Mammary epithelial cell (primary cell): ENCODE measurements at regions of chr4 and their contacts with region 1.

Region 1: GRCh38 chr4:157514711-157515110 is 294.2 kb downstream of the GRIA2 start:
- DNase-seq: no peak
- H3K4me3 ChIP-seq: no peak overlapping the region
- H3K27ac ChIP-seq: no peak overlapping the region
- H3K4me1 ChIP-seq: no peaks in the 10 kb centered on the region
- H3K27me3 ChIP-seq: peaks cover 3% of the 10 kb centered on the region
- CTCF ChIP-seq: peak; percentile 11 to 35

Region 2: DNA sequence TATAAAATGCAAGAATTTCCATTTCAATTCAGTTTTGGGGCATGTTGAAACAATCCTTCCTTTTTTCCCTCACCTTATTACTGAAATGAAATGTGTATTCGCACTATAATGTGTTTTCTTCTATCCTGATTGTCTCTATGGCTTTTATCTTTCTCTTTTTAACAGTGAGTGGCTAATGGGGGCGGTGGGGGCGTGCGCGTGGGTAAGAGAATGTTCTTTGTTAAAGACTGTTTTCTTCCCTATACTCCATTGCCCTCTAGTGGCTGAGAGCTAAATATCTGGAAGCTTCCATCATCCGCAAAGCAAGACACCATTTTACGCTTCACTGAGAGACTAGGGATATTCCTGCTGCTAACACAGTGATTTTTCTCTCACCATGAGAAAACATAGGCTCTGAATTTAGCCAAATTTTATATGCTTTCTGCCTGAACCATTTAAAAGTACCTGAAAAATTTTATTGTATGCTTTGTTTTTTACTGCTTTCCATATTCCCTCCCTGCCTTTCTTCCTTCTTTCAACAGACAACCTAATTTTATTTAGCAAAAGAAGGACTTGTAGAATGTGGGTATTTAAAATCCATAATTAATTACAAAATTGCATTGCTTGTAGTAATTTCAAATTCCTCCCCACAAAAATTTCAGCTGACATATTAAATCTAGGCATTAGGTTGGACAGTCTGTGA is 464.1 kb after region 1 on chr4:
- CTCF ChIA-PET with region 1: interaction called, 4 read pairs
- dilution Hi-C with region 1: no loop called
- in situ Hi-C with region 1: no loop called
- intact Hi-C with region 1: loop called (anchors 1 kb)
- DNase-seq: peak; percentile 44
- H3K4me3 ChIP-seq: no peak overlapping the region
- H3K27ac ChIP-seq: no peak overlapping the region
- H3K4me1 ChIP-seq: no peaks in the 10 kb centered on the region
- H3K27me3 ChIP-seq: peaks cover 2% of the 10 kb centered on the region
- CTCF ChIP-seq: peak; percentile 81 to 85